ENCODE measurements at regions of chr18 and their contacts with region 1.

Region 1: DNA sequence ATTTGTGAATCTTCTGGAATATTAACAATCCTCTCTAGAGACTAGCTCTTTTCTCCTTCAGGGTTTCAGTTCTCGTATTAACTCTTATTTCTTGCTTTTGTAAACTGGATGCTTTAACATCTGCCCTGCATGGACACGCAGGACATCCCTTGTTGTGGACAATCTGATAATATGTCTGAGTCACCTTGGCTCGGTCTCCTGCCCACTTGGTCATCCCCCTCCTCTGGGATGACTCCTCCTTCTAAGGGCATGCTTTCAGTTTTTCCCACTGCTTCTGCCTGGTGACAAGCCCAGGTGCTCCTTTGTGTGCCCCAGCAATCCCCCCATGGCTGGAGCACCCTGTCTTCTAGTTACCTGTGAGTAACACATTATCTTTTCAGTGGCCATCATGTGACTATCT is 460.5 kb downstream of the DSC3 start:
- DNase-seq: peak; percentile 57
- ATAC-seq: peak; percentile 70
- H3K4me3 ChIP-seq: no peak overlapping the region
- H3K27ac ChIP-seq: 0 out of 2 replicates have a peak overlapping the region, but pooled peaks have one; percentile 1
- H3K4me1 ChIP-seq: peaks cover 12% of the 10 kb centered on the region; the same call in 1 of the 2 replicates
- H3K27me3 ChIP-seq: no peaks in the 10 kb centered on the region
- CTCF ChIP-seq: no peak

Region 2: DNA sequence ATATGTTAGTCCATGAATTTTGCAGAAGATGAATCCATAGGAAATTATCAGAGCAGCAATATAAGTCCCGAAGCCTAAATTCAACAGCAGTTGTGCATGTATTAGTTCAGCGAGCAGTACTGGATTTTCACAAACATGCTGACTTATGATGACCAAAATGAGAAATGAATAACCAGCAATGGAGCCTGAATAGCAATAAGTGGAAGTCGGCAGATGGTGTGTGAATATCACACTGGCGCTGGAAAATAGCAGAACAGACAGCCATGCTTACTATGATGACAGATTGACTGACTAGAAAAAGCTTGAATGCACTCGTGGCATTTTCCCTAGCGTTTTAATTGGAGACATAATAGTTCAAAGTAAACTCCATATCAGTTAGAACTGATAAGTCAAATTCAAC is 654.0 kb before region 1 on chr18:
- CTCF ChIA-PET with region 1: no interaction called
- POLR2A ChIA-PET with region 1: no interaction called
- intact Hi-C with region 1: no loop called
- DNase-seq: no peak
- ATAC-seq: no peak
- H3K4me3 ChIP-seq: no peak overlapping the region
- H3K27ac ChIP-seq: no peak overlapping the region
- H3K4me1 ChIP-seq: no peaks in the 10 kb centered on the region
- H3K27me3 ChIP-seq: no peaks in the 10 kb centered on the region
- CTCF ChIP-seq: no peak

Region 3: DNA sequence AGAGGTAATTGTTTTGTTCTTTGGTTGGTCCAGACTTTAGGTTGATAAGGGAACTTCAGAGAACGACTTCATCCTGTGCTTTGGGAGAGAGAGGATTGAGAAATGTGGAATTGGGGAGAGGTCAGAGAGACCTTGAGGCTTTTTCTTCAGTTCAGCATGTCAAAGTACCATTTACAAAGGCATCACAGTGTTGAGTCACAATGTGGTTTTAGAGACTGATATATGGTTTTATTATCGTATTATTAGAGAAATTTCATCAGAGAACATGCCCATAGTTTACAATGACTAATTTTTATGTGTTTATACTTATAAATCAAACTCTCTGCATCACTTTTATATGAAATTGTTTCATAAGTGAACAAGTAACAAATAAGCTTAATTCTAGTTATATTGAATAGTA is 166.2 kb before region 1 on chr18:
- CTCF ChIA-PET with region 1: no interaction called
- POLR2A ChIA-PET with region 1: no interaction called
- intact Hi-C with region 1: loop called (anchors 10 kb)
- DNase-seq: peak; percentile 24
- ATAC-seq: peak; percentile 73
- H3K4me3 ChIP-seq: no peak overlapping the region
- H3K27ac ChIP-seq: no peak overlapping the region
- H3K4me1 ChIP-seq: no peaks in the 10 kb centered on the region
- H3K27me3 ChIP-seq: no peaks in the 10 kb centered on the region
- CTCF ChIP-seq: no peak

Region 4: GRCh38 chr18:30712383-30712782 is 130.3 kb after region 1 on chr18:
- CTCF ChIA-PET with region 1: no interaction called
- POLR2A ChIA-PET with region 1: no interaction called
- intact Hi-C with region 1: loop called (anchors 10 kb)
- DNase-seq: no peak
- ATAC-seq: no peak
- H3K4me3 ChIP-seq: no peak overlapping the region
- H3K27ac ChIP-seq: no peak overlapping the region
- H3K4me1 ChIP-seq: peaks cover 12% of the 10 kb centered on the region
- H3K27me3 ChIP-seq: no peaks in the 10 kb centered on the region
- CTCF ChIP-seq: no peak

Region 5: GRCh38 chr18:30748541-30748940 is 166.5 kb after region 1 on chr18:
- CTCF ChIA-PET with region 1: no interaction called
- POLR2A ChIA-PET with region 1: no interaction called
- intact Hi-C with region 1: loop called (anchors 10 kb)
- DNase-seq: no peak
- ATAC-seq: no peak
- H3K4me3 ChIP-seq: no peak overlapping the region
- H3K27ac ChIP-seq: no peak overlapping the region
- H3K4me1 ChIP-seq: no peaks in the 10 kb centered on the region
- H3K27me3 ChIP-seq: no peaks in the 10 kb centered on the region
- CTCF ChIP-seq: no peak

Region 6: GRCh38 chr18:30787410-30787809 is 205.3 kb after region 1 on chr18:
- CTCF ChIA-PET with region 1: no interaction called
- POLR2A ChIA-PET with region 1: no interaction called
- intact Hi-C with region 1: no loop called
- DNase-seq: no peak
- ATAC-seq: no peak
- H3K4me3 ChIP-seq: no peak overlapping the region
- H3K27ac ChIP-seq: no peak overlapping the region
- H3K4me1 ChIP-seq: no peaks in the 10 kb centered on the region
- H3K27me3 ChIP-seq: no peaks in the 10 kb centered on the region
- CTCF ChIP-seq: no peak

Measured in PC-3 (cell line).